AG04449 (cell line): ENCODE measurements at regions of chr1 and their contacts with region 1.

Region 1: DNA sequence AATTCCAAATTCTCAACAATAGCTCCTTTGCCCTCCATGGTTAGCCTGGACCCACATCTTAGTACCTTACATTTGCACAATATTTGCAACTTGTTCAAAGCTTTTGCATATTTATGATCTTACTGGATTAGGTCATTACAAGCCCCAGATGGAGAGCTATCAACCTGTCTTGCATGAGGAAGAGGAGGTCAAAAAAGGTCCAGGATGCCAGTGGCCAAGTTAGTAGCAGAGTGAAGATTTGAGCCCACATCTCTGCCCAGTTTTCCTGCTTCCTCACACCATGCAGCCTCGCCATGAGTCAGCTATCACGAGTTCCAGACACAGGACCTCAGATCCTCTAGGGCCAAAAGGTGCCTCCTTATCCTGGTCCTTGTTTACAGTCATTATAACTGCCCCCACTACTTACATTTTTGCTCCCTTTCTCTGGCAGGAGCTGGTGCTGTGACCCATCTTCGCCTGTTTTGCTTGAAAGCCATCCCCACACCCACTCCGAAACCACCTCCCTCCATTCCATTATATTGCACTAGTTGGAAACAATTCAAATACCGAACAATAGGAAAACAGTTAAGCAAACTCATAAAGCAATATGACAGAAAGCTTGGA is 5.0 kb upstream of the AHCYL1 start:
- DNase-seq: no peak
- H3K4me3 ChIP-seq: no peak overlapping the region
- CTCF ChIP-seq: no peak

Region 2: DNA sequence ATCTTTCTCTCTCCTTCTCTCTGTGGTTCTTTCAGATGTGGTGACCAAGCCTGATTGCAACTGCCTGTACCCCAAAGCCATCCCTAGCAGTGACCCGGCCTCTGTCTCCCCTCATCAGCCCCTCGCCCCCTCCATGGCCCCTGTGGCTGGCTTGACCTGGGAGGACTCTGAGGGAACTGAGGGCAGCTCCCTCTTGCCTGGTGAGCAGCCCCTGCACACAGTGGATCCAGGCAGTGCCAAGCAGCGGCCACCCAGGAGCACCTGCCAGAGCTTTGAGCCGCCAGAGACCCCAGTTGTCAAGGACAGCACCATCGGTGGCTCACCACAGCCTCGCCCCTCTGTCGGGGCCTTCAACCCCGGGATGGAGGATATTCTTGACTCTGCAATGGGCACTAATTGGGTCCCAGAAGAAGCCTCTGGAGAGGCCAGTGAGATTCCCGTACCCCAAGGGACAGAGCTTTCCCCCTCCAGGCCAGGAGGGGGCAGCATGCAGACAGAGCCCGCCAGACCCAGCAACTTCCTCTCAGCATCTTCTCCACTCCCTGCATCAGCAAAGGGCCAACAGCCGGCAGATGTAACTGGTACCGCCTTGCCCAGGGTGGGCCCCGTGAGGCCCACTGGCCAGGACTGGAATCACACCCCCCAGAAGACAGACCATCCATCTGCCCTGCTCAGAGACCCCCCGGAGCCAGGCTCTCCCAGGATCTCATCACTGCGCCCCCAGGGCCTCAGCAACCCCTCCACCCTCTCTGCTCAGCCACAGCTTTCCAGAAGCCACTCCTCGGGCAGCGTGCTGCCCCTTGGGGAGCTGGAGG is 56.3 kb before region 1 on chr1:
- CTCF ChIA-PET with region 1: interaction called, 42 read pairs
- POLR2A ChIA-PET with region 1: interaction called, 3 read pairs
- DNase-seq: no peak
- H3K4me3 ChIP-seq: no peak overlapping the region
- CTCF ChIP-seq: peak; percentile 56